Heart right ventricle (tissue), 16 donors: ENCODE measurements at regions of chr6 and their contacts with region 1.

Region 1: DNA sequence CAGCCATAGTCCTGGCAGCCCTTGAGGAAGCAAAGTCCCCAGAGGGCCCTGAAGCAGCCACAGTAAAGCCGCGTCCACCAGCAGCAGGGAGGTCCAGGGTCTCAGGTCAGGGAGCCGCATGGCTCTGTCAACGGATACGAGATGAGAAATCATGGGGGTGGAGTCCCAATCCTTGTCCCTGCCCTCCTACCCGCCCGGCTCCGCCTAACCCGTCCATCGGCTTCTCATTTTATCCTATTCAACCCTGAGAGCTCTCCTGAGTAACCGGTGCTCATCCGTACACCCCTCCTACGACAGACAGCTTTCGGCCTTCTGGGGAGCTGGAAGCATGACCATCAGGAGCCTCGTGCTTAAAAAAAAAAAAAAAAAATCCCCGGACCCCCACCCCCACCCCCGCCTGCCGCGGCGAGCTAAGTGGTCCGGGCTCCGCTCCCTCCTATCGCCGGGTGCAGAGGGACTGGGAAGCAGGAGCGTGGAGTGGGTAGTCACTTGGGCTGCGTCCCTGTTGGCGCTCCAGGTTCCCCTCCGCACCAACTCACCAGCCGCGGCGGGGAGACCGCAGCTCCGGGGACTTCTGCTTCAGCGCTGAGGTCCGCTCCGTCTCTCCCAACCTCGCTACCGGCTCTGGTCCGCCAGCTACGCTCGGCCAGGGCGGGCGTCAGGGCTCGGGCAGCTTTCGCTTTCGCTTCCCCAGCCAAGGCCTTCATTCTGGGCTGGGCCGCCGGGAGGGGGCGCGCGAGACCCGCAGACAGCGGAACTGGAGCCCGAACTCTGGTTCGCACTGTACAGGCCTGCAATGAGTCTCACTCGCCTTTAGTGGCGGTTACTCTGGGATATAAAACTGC is at the start of gene TAP2:
- DNase-seq: peak; percentile 96 to 97
- ATAC-seq: peak; percentile 96 to 99 (median 97)
- H3K4me3 ChIP-seq: peak within 1 kb of the TSS; percentile 63 to 86 (median 76)
- H3K27ac ChIP-seq: peak within 1 kb of the TSS; percentile 84 to 96 (median 94)
- H3K4me1 ChIP-seq: peaks cover 0 to 68% (median 33%) of the 10 kb centered on the region in 9 donors
- H3K27me3 ChIP-seq: no peaks in the 10 kb centered on the region
- CTCF ChIP-seq: peak; percentile 90 to 99 (median 97)
- total RNA-seq, gene TAP2: 8.8 to 92.1 (median 13.8) TPM

Region 2: DNA sequence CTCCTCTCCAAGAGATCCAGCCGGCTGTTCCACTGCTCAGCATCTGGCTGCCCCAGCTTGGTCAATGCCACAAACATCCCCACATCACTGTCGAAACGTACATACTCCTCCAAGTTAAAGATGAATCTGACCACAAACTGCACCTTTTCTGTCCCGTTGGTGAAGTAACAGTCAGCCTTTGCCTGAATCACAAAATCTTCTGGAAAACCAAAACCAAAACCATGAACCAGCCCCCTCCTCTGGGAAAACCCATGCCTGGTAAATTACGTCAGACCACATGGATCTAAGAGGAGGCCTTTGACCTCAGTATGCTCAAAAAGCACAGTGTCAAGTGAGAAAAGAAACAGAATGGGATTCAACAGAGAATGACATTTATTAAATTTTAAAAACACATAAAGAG is 23.2 kb before region 1 on chr6:
- intact Hi-C with region 1: loop called in 1 of 10 experiments (anchors 1 kb)
- DNase-seq: no peak
- ATAC-seq: peak in 5 of 8 donors; percentile 41 to 57 (median 49)
- H3K4me3 ChIP-seq: peak overlapping the region in 3 of 10 donors; percentile 11 to 24 (median 12)
- H3K27ac ChIP-seq: peak overlapping the region in 3 of 10 donors; percentile 6 to 53 (median 7)
- H3K4me1 ChIP-seq: peaks cover 0 to 21% (median 11%) of the 10 kb centered on the region in 9 donors
- H3K27me3 ChIP-seq: no peaks in the 10 kb centered on the region
- CTCF ChIP-seq: no peak

Region 3: GRCh38 chr6:32853541-32854375 is 15.4 kb after region 1 on chr6 and contains the starts of genes PSMB9 and TAP1:
- intact Hi-C with region 1: loop called in 6 of 10 experiments (anchors 1 to 2 kb)
- DNase-seq: peak; percentile 93 to 96
- ATAC-seq: peak; percentile 92 to 97 (median 96)
- H3K4me3 ChIP-seq: peak within 1 kb of the TSS; percentile 67 to 99 (median 92)
- H3K27ac ChIP-seq: peak within 1 kb of the TSS; percentile 95 to 99 (median 98)
- H3K4me1 ChIP-seq: peaks cover 0 to 79% (median 28%) of the 10 kb centered on the region in 9 donors
- H3K27me3 ChIP-seq: no peaks in the 10 kb centered on the region
- CTCF ChIP-seq: peak; percentile 46 to 98 (median 85)
- total RNA-seq, gene PSMB9: 10.0 to 198 (median 14.3) TPM
- total RNA-seq, gene TAP1: 12.8 to 213 (median 15.4) TPM

Region 4: GRCh38 chr6:32952817-32953739 is 114.7 kb after region 1 on chr6 and contains the start of gene HLA-DMA:
- intact Hi-C with region 1: no loop called
- DNase-seq: peak; percentile 70 to 92
- ATAC-seq: peak; percentile 98 to 100 (median 99)
- H3K4me3 ChIP-seq: peak within 1 kb of the TSS in 9 of 10 donors; percentile 19 to 55 (median 44)
- H3K27ac ChIP-seq: peak within 1 kb of the TSS in 9 of 10 donors; percentile 61 to 90 (median 74)
- H3K4me1 ChIP-seq: peaks cover 0 to 61% (median 16%) of the 10 kb centered on the region in 9 donors
- H3K27me3 ChIP-seq: no peaks in the 10 kb centered on the region
- CTCF ChIP-seq: peak; percentile 71 to 91 (median 84)
- total RNA-seq, gene HLA-DMA: 7.8 to 106 (median 14.5) TPM